GM12878 (cell line): ENCODE measurements at regions of chr2 and their contacts with region 1.

Region 1: GRCh38 chr2:170815746-170816503 is 762 bp upstream of the GAD1 start:
- DNase-seq: no peak
- ATAC-seq: peak; percentile 75
- H3K4me3 ChIP-seq: peak overlapping the region; percentile 54
- H3K27ac ChIP-seq: no peak overlapping the region
- H3K4me1 ChIP-seq: peaks cover 11% of the 10 kb centered on the region
- H3K27me3 ChIP-seq: peaks cover 5 to 34% of the 10 kb centered on the region in 2 experiments
- CTCF ChIP-seq: peak; percentile 65 to 79 (median 78)
- EP300 ChIP-seq: no peak
- POLR2A ChIP-seq: no peak
- RAD21 ChIP-seq: peak; percentile 80

Region 2: GRCh38 chr2:168874368-168875054 is 1941.4 kb before region 1 on chr2:
- CTCF ChIA-PET with region 1: no interaction called
- POLR2A ChIA-PET with region 1: no interaction called
- RAD21 ChIA-PET with region 1: no interaction called
- SMC1A ChIA-PET with region 1: no interaction called
- in situ Hi-C with region 1: no loop called
- intact Hi-C with region 1: no loop called
- DNase-seq: no peak
- ATAC-seq: no peak
- H3K4me3 ChIP-seq: no peak overlapping the region
- H3K27ac ChIP-seq: no peak overlapping the region
- H3K4me1 ChIP-seq: no peaks in the 10 kb centered on the region
- H3K27me3 ChIP-seq: no peaks in the 10 kb centered on the region
- CTCF ChIP-seq: no peak
- EP300 ChIP-seq: no peak
- POLR2A ChIP-seq: no peak
- RAD21 ChIP-seq: no peak

Region 3: GRCh38 chr2:170324640-170325046 is 491.3 kb before region 1 on chr2:
- CTCF ChIA-PET with region 1: interaction called, 54 read pairs
- POLR2A ChIA-PET with region 1: no interaction called
- RAD21 ChIA-PET with region 1: interaction called, 36 read pairs
- SMC1A ChIA-PET with region 1: interaction called, 18 read pairs
- in situ Hi-C with region 1: no loop called
- intact Hi-C with region 1: loop called (anchors 1 kb)
- DNase-seq: no peak
- ATAC-seq: peak; percentile 89
- H3K4me3 ChIP-seq: no peak overlapping the region
- H3K27ac ChIP-seq: no peak overlapping the region
- H3K4me1 ChIP-seq: no peaks in the 10 kb centered on the region
- H3K27me3 ChIP-seq: no peaks in the 10 kb centered on the region
- CTCF ChIP-seq: peak; percentile 80 to 88 (median 84)
- EP300 ChIP-seq: no peak
- POLR2A ChIP-seq: no peak
- RAD21 ChIP-seq: peak; percentile 97

Region 4: DNA sequence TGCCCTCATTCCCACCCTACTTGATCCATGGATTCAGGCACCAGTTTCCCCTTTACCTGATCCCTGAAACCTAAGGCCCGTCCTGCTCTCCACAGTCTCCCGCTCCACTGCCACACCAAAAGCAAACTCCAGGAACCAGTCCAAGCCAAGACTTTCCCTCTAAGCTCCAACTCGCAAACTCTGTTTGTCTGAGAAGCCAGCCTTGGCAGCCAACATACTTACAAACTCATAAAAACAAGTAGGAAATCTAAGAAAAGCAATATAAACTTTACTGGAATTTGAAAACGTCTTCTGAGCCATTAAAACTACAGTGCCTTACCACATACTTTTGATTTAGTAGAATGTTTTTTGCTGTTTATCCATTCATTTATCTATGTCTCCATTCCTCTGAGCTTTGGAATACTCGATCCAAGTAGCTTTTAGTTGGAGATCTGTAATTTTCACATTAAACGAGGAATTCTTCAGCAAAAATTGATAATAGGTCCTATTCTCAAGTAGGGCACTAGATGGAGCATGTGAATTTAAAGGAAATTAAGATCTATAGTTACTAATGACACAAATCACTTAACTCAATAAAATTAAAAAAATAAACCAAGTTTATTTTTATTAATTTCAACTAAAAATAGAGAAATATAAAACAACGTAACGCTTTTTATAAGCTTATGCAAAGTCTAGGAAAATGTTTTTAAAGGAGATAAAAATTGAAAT is 438.3 kb before region 1 on chr2:
- CTCF ChIA-PET with region 1: interaction called, 45 read pairs
- POLR2A ChIA-PET with region 1: no interaction called
- RAD21 ChIA-PET with region 1: interaction called, 5 read pairs
- SMC1A ChIA-PET with region 1: interaction called, 8 read pairs
- in situ Hi-C with region 1: no loop called
- intact Hi-C with region 1: no loop called
- DNase-seq: no peak
- ATAC-seq: no peak
- H3K4me3 ChIP-seq: no peak overlapping the region
- H3K27ac ChIP-seq: no peak overlapping the region
- H3K4me1 ChIP-seq: no peaks in the 10 kb centered on the region
- H3K27me3 ChIP-seq: no peaks in the 10 kb centered on the region
- CTCF ChIP-seq: no peak
- EP300 ChIP-seq: no peak
- POLR2A ChIP-seq: no peak
- RAD21 ChIP-seq: no peak

Region 5: GRCh38 chr2:170486730-170487129 is 329.2 kb before region 1 on chr2:
- CTCF ChIA-PET with region 1: interaction called, 24 read pairs
- POLR2A ChIA-PET with region 1: no interaction called
- RAD21 ChIA-PET with region 1: interaction called, 25 read pairs
- SMC1A ChIA-PET with region 1: interaction called, 31 read pairs
- in situ Hi-C with region 1: no loop called
- intact Hi-C with region 1: loop called (anchors 10 kb)
- DNase-seq: no peak
- ATAC-seq: peak; percentile 37; the same call in 1 of the 3 replicates
- H3K4me3 ChIP-seq: no peak overlapping the region
- H3K27ac ChIP-seq: no peak overlapping the region
- H3K4me1 ChIP-seq: no peaks in the 10 kb centered on the region
- H3K27me3 ChIP-seq: no peaks in the 10 kb centered on the region
- CTCF ChIP-seq: peak in 1 of 3 experiments; percentile 39; a peak in 2 of 6 replicates
- EP300 ChIP-seq: no peak
- POLR2A ChIP-seq: no peak
- RAD21 ChIP-seq: peak; percentile 50

Region 6: DNA sequence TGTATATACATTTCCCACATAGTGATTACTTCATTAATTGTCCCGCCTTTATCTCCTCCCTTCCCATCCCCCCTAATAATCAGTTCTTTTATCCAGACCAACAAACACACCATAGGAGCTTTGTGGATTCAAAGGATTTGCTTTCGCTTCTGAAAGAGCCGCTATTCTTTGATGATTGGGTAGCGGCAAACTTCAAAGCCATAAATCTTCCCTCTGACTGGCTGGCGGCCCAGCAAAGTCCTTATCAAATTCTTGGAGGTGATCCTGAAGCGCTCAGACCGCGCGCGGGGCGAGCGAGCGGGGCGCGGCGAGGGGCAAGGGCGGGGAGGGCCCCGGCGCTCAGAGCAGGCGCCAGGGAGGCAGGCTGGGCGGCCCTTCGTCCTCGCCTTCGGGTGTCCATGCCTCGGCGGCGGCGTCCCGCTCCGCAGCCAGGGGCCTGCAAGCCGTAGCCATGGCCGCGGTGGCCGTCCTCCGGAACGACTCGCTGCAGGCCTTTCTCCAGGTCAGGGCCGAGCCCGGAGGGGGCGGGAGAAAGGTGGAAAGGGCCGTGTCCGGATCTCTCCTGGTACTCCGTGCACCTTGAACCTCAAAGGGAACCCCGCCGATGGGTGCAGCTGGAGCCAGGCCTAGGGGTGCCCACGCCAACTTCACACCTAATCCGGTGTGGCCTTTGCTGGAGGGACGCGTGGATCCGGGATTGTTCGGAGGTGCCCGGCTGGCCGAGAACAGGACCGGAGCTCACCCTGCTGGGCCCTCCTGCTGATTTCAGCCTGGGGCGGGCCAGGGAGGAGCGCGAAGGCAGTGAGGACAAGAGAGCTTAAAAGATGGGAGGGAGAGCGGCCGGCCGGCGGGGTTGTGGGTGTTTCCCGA is 100.6 kb before region 1 on chr2 and contains the start of gene SP5:
- CTCF ChIA-PET with region 1: interaction called, 3 read pairs
- POLR2A ChIA-PET with region 1: no interaction called
- RAD21 ChIA-PET with region 1: no interaction called
- SMC1A ChIA-PET with region 1: interaction called, 4 read pairs
- in situ Hi-C with region 1: no loop called
- intact Hi-C with region 1: loop called (anchors 5 kb)
- DNase-seq: no peak
- ATAC-seq: peak; percentile 53
- H3K4me3 ChIP-seq: peak within 1 kb of the TSS; percentile 55; the same call in 1 of the 2 replicates
- H3K27ac ChIP-seq: no peak within 1 kb of the TSS
- H3K4me1 ChIP-seq: no peaks in the 10 kb centered on the region; the same call in 1 of the 2 replicates
- H3K27me3 ChIP-seq: peaks cover 29 to 39% of the 10 kb centered on the region in 2 experiments
- CTCF ChIP-seq: no peak
- EP300 ChIP-seq: no peak
- POLR2A ChIP-seq: no peak
- RAD21 ChIP-seq: no peak
- polyA plus RNA-seq, gene SP5: not detected

Region 7: GRCh38 chr2:170848587-170848986 is 32.7 kb after region 1 on chr2:
- CTCF ChIA-PET with region 1: no interaction called
- POLR2A ChIA-PET with region 1: no interaction called
- RAD21 ChIA-PET with region 1: no interaction called
- SMC1A ChIA-PET with region 1: no interaction called
- in situ Hi-C with region 1: no loop called
- intact Hi-C with region 1: no loop called
- DNase-seq: no peak
- ATAC-seq: no peak
- H3K4me3 ChIP-seq: no peak overlapping the region
- H3K27ac ChIP-seq: no peak overlapping the region
- H3K4me1 ChIP-seq: no peaks in the 10 kb centered on the region
- H3K27me3 ChIP-seq: no peaks in the 10 kb centered on the region
- CTCF ChIP-seq: no peak
- EP300 ChIP-seq: no peak
- POLR2A ChIP-seq: no peak
- RAD21 ChIP-seq: no peak

Region 8: GRCh38 chr2:170984079-170984478 is 168.2 kb after region 1 on chr2:
- CTCF ChIA-PET with region 1: no interaction called
- POLR2A ChIA-PET with region 1: no interaction called
- RAD21 ChIA-PET with region 1: no interaction called
- SMC1A ChIA-PET with region 1: no interaction called
- in situ Hi-C with region 1: no loop called
- intact Hi-C with region 1: no loop called
- DNase-seq: no peak
- ATAC-seq: peak; percentile 47
- H3K4me3 ChIP-seq: no peak overlapping the region
- H3K27ac ChIP-seq: no peak overlapping the region
- H3K4me1 ChIP-seq: no peaks in the 10 kb centered on the region
- H3K27me3 ChIP-seq: no peaks in the 10 kb centered on the region
- CTCF ChIP-seq: no peak
- EP300 ChIP-seq: no peak
- POLR2A ChIP-seq: peak; percentile 36; the same call in 1 of the 2 replicates
- RAD21 ChIP-seq: no peak